GM13977 (cell line): ENCODE measurements at regions of chr1 and their contacts with region 1.

Region 1: GRCh38 chr1:84122780-84123382 is 21.2 kb upstream of the PRKACB start:
- DNase-seq: peak; percentile 15
- CTCF ChIP-seq: peak; percentile 68

Region 2: DNA sequence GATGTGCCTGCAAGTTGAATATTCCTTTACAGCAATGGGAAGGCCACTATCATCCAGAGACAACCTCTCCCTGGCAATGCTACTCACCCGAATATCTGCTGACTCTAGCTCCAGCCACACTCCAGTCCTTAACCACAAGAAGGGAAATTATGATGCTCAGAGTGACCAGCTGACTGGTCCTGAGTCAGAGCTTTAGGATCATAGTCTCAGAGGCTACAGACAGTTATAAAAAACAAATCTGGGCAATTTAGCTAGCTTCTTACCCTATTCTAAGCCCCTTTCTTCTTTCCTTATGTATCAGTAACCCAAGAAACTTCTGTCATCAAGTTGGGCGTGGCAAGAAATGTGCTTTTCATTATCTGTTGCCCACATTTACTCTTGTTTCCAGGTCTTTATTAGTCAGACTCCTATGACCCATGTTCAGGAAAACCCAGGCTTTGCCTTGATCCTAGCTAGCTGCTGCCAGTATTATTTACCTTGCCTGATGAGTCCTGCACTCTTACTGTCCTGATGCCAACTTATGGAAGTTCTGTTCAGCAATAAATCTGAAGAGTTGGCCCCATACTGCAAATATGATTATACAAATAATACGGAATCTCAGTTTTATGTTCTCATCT is 331.0 kb before region 1 on chr1:
- in situ Hi-C with region 1: no loop called
- DNase-seq: no peak
- CTCF ChIP-seq: no peak

Region 3: GRCh38 chr1:83929184-83929583 is 193.7 kb before region 1 on chr1:
- in situ Hi-C with region 1: loop called (anchors 10 kb)
- DNase-seq: no peak
- CTCF ChIP-seq: no peak

Region 4: DNA sequence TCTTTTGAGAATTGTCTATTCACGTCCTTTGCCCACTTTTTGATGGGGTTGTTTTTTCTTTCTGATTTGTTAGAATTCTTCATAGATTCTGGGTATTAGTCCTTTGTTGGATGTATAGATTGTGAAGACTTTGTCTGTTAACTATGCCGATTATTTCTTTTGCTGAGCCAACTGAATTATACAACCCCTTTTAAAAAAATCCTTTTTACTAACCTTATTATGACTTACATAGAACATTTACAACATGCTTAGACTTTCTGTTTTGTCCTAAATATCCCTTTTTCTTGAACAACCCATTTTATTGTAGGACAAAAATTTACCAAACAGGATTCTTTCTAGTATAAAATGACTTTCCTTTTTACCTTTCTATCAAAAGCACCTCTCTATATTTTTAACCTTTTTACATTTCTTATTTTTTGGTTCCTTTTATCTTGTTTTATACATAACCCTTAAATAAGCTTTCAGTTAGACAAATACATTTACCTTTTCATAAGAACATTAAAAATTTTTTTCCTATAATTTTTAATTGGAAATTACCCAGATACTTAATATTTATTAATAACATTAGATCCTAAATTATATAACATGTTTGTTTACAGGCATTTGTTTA is 53.5 kb before region 1 on chr1:
- in situ Hi-C with region 1: no loop called
- DNase-seq: no peak
- CTCF ChIP-seq: no peak